ENCODE measurements at regions of chr1 and their contacts with region 1.

Region 1: DNA sequence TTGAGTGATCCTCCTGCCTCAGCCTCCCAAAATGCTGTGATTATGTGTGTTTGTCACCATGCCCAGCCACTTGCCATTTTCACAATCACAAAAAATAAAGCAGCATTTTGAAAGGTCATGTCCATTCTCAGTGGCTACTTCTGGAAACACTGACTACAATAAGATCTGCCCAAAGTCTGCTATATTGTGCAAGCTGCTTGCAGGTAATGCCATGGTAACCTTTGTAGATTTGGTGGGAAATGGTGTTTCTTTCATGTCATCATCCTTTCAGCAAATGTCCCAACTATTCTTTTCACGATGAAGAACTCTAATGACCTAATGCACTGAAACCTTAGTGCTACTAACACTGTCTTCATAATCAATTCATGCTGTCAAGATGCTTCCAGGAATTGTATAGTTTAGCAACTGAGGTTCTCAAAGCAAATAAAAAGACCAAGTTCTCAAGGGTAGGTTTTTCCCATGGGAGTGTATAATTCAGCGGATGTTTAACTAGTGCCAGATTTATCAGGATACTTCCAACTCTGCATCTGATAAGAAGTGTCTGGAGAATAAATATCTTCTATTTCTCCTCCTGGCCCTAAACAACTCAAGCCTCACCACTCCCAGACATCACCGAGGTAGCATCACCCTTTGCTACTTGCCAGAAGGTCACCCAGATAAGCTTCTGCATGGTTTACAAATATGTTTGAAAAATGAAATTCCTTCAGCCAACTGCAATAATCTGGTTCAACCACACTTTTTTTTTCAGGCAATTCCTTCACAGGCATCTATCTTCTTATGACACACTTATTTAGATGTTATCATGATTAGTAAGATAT is 132.0 kb upstream of the ZC3H11B start:
- DNase-seq: no peak
- H3K4me3 ChIP-seq: no peak overlapping the region
- H3K27ac ChIP-seq: no peak overlapping the region
- H3K4me1 ChIP-seq: no peaks in the 10 kb centered on the region
- H3K27me3 ChIP-seq: peaks cover 10% of the 10 kb centered on the region
- CTCF ChIP-seq: no peak

Region 2: DNA sequence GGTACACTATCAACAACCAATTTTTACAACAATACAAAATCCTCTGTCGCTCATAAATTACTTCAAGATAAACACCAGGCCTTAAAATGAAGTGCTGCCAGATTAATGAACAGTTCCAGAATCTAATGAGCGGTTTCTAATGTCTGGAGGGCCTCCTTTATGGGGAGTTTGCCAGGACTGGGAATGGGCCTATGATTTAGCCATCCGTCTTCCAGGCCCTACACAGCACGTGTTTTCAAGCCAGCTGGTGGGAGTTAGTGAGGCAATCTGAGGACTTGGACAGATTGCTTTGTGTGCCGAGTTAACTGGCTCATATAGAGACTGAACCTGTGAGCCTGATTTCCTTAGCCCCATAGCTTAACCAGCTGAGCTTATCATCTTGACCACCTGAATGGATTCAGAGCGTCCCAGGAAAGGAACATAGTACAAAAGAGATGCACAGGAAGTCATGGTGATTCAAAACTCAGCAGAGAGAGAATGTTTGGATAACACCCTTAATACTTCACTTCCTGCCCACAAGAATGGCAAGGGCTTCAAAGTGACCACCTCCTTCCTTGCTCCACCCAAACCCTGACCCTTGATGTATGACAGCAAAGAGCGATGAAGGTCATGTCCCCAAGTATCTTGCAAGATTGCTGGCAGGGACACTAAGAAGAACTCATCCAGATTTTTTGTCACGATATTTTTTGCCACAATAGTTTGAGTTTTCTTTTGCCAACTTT is 40.0 kb after region 1 on chr1:
- CTCF ChIA-PET with region 1: no interaction called
- POLR2A ChIA-PET with region 1: no interaction called
- intact Hi-C with region 1: no loop called
- DNase-seq: no peak
- H3K4me3 ChIP-seq: no peak overlapping the region
- H3K27ac ChIP-seq: no peak overlapping the region
- H3K4me1 ChIP-seq: no peaks in the 10 kb centered on the region
- H3K27me3 ChIP-seq: peaks cover 11% of the 10 kb centered on the region
- CTCF ChIP-seq: no peak

Region 3: GRCh38 chr1:219900201-219900600 is 155.3 kb after region 1 on chr1:
- CTCF ChIA-PET with region 1: no interaction called
- POLR2A ChIA-PET with region 1: interaction called, 12 read pairs
- intact Hi-C with region 1: no loop called
- DNase-seq: no peak
- H3K4me3 ChIP-seq: no peak overlapping the region
- H3K27ac ChIP-seq: no peak overlapping the region
- H3K4me1 ChIP-seq: no peaks in the 10 kb centered on the region
- H3K27me3 ChIP-seq: peaks cover 13% of the 10 kb centered on the region
- CTCF ChIP-seq: no peak